ENCODE measurements at regions of chr11 and their contacts with region 1.

Region 1: DNA sequence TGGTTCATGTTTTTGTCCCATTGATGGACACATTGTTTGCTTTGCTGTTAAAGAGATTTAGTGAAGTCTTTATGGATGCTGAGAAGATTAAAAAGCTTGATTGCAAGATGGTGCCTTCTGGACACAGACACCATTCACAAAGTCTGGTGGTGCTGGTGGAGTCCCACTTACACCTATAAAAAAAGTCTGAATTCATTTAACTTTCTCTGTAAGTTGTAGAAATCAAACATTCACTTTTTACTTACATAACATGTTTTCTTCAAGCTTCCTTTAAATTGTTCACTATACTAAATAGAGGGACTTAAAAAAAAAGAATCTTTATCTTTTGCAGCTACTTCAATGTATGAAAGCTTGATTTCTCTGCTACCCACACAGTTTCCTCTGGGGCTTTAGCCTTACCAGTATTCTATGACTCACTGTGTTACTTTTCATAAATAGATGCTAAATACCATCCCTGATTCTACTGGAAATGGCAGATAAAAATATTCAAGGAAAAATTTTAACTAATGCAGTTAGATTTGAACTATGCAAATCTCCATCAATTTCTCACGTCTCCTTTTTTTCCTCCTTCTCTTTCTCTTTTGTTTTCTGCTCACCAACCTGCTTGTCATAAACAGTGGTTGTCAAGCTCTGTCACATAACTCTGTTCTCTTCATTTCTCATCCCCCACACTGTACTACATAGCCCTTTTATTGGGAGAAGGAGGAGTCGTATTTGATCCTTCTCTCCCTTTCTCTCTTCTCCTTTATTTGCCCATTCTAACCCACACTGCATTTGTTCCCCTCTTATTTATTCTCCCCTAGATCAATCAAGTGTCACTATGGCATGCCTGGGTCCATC is 89.7 kb downstream of the FAM76B start:
- DNase-seq: no peak
- H3K4me3 Mint-ChIP-seq: peak overlapping the region; percentile 65
- H3K27ac Mint-ChIP-seq: peak overlapping the region; percentile 85
- H3K4me1 Mint-ChIP-seq: peaks cover 56% of the 10 kb centered on the region
- H3K27me3 Mint-ChIP-seq: no peaks in the 10 kb centered on the region

Region 2: GRCh38 chr11:95067039-95067840 is 632.6 kb before region 1 on chr11:
- CTCF ChIA-PET with region 1: interaction called, 5 read pairs
- POLR2A ChIA-PET with region 1: no interaction called
- intact Hi-C with region 1: loop called (anchors 5 kb)
- DNase-seq: peak; percentile 85
- H3K4me3 Mint-ChIP-seq: peak overlapping the region; percentile 87
- H3K27ac Mint-ChIP-seq: peak overlapping the region; percentile 97
- H3K4me1 Mint-ChIP-seq: peaks cover 24% of the 10 kb centered on the region
- H3K27me3 Mint-ChIP-seq: no peaks in the 10 kb centered on the region

Region 3: GRCh38 chr11:95337175-95337957 is 362.5 kb before region 1 on chr11:
- CTCF ChIA-PET with region 1: interaction called, 3 read pairs
- POLR2A ChIA-PET with region 1: interaction called, 3 read pairs
- intact Hi-C with region 1: loop called (anchors 5 kb)
- DNase-seq: peak; percentile 66
- H3K4me3 Mint-ChIP-seq: no peak overlapping the region
- H3K27ac Mint-ChIP-seq: no peak overlapping the region
- H3K4me1 Mint-ChIP-seq: peaks cover 3% of the 10 kb centered on the region
- H3K27me3 Mint-ChIP-seq: no peaks in the 10 kb centered on the region

Region 4: GRCh38 chr11:95584589-95584988 is 115.3 kb before region 1 on chr11:
- CTCF ChIA-PET with region 1: no interaction called
- POLR2A ChIA-PET with region 1: no interaction called
- intact Hi-C with region 1: loop called (anchors 2 kb)
- DNase-seq: no peak
- H3K4me3 Mint-ChIP-seq: no peak overlapping the region
- H3K27ac Mint-ChIP-seq: no peak overlapping the region
- H3K4me1 Mint-ChIP-seq: peaks cover 18% of the 10 kb centered on the region
- H3K27me3 Mint-ChIP-seq: no peaks in the 10 kb centered on the region

Region 5: GRCh38 chr11:95661162-95661561 is 38.7 kb before region 1 on chr11:
- CTCF ChIA-PET with region 1: interaction called, 3 read pairs
- POLR2A ChIA-PET with region 1: no interaction called
- intact Hi-C with region 1: loop called (anchors 1 kb)
- DNase-seq: no peak
- H3K4me3 Mint-ChIP-seq: no peak overlapping the region
- H3K27ac Mint-ChIP-seq: no peak overlapping the region
- H3K4me1 Mint-ChIP-seq: peaks cover 21% of the 10 kb centered on the region
- H3K27me3 Mint-ChIP-seq: no peaks in the 10 kb centered on the region

Region 6: DNA sequence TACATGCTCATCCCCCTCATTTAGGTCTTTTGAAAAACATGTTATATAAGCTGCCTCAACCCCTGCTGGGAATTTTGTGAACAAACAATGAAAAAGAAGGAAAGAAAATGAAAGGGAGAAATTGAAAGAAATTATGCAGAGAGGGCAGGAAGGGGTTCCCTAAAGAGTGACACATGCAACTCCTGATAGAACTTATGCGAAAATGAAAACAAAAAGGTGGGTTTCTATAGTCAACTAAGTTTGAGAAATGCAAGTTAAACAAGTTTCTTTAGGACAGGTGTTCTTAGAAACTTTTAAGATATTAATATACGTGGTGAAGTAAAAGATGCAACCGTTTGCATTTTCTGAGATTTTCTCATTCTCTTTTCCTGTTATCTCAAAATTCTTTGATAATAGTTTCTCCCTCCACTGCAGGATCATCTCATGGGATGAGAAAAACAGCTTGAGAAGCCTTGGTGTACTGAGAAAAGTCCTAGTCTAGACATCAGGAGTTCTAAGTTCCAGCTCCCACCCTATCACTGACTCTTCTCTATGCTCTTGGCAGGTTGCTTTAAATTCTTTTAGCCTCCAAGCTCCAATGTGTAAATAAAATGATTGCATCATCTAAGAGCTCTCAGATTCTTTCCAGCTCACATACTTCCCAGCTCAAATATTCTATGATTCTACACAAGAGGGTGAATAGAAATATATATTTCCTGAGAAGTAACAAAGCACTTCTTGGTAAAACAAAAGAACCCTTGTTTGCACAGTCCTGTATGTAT is 19.5 kb before region 1 on chr11:
- CTCF ChIA-PET with region 1: interaction called, 24 read pairs
- POLR2A ChIA-PET with region 1: interaction called, 4 read pairs
- intact Hi-C with region 1: loop called (anchors 1 kb)
- DNase-seq: no peak
- H3K4me3 Mint-ChIP-seq: peak overlapping the region; percentile 9
- H3K27ac Mint-ChIP-seq: peak overlapping the region; percentile 45
- H3K4me1 Mint-ChIP-seq: peaks cover 85% of the 10 kb centered on the region
- H3K27me3 Mint-ChIP-seq: no peaks in the 10 kb centered on the region

Region 7: GRCh38 chr11:95715777-95716241 is 16.0 kb after region 1 on chr11:
- CTCF ChIA-PET with region 1: interaction called, 34 read pairs
- POLR2A ChIA-PET with region 1: no interaction called
- intact Hi-C with region 1: loop called (anchors 1 kb)
- DNase-seq: peak; percentile 71
- H3K4me3 Mint-ChIP-seq: no peak overlapping the region
- H3K27ac Mint-ChIP-seq: peak overlapping the region; percentile 43
- H3K4me1 Mint-ChIP-seq: peaks cover 59% of the 10 kb centered on the region
- H3K27me3 Mint-ChIP-seq: no peaks in the 10 kb centered on the region

Region 8: GRCh38 chr11:95751515-95751914 is 51.7 kb after region 1 on chr11:
- CTCF ChIA-PET with region 1: no interaction called
- POLR2A ChIA-PET with region 1: no interaction called
- intact Hi-C with region 1: no loop called
- DNase-seq: no peak
- H3K4me3 Mint-ChIP-seq: no peak overlapping the region
- H3K27ac Mint-ChIP-seq: no peak overlapping the region
- H3K4me1 Mint-ChIP-seq: no peaks in the 10 kb centered on the region
- H3K27me3 Mint-ChIP-seq: no peaks in the 10 kb centered on the region

Region 9: GRCh38 chr11:96001037-96001436 is 301.2 kb after region 1 on chr11:
- CTCF ChIA-PET with region 1: no interaction called
- POLR2A ChIA-PET with region 1: no interaction called
- intact Hi-C with region 1: no loop called
- DNase-seq: no peak
- H3K4me3 Mint-ChIP-seq: no peak overlapping the region
- H3K27ac Mint-ChIP-seq: no peak overlapping the region
- H3K4me1 Mint-ChIP-seq: peaks cover 9% of the 10 kb centered on the region
- H3K27me3 Mint-ChIP-seq: no peaks in the 10 kb centered on the region